IMR-90 (cell line): ENCODE measurements at regions of chr2 and their contacts with region 1.

Region 1: GRCh38 chr2:15471601-15472000 is 89.5 kb downstream of the NBAS start:
- DNase-seq: no peak
- ATAC-seq: no peak
- H3K4me3 ChIP-seq: no peak overlapping the region
- H3K27ac ChIP-seq: no peak overlapping the region
- H3K4me1 ChIP-seq: no peaks in the 10 kb centered on the region
- H3K27me3 ChIP-seq: no peaks in the 10 kb centered on the region
- CTCF ChIP-seq: no peak
- POLR2A ChIP-seq: no peak
- RAD21 ChIP-seq: no peak

Region 2: GRCh38 chr2:14420851-14421250 is 1050.8 kb before region 1 on chr2:
- CTCF ChIA-PET with region 1: no interaction called
- POLR2A ChIA-PET with region 1: no interaction called
- dilution Hi-C with region 1: no loop called
- in situ Hi-C with region 1: no loop called
- intact Hi-C with region 1: no loop called
- DNase-seq: peak; percentile 45
- ATAC-seq: no peak
- H3K4me3 ChIP-seq: no peak overlapping the region
- H3K27ac ChIP-seq: no peak overlapping the region
- H3K4me1 ChIP-seq: no peaks in the 10 kb centered on the region
- H3K27me3 ChIP-seq: no peaks in the 10 kb centered on the region
- CTCF ChIP-seq: no peak
- POLR2A ChIP-seq: no peak
- RAD21 ChIP-seq: no peak

Region 3: GRCh38 chr2:15421753-15422152 is 49.8 kb before region 1 on chr2:
- CTCF ChIA-PET with region 1: no interaction called
- POLR2A ChIA-PET with region 1: no interaction called
- dilution Hi-C with region 1: no loop called
- in situ Hi-C with region 1: no loop called
- intact Hi-C with region 1: loop called (anchors 1 kb)
- DNase-seq: no peak
- ATAC-seq: no peak
- H3K4me3 ChIP-seq: no peak overlapping the region
- H3K27ac ChIP-seq: no peak overlapping the region
- H3K4me1 ChIP-seq: peaks cover 3% of the 10 kb centered on the region; the same call in 1 of the 2 replicates
- H3K27me3 ChIP-seq: no peaks in the 10 kb centered on the region
- CTCF ChIP-seq: no peak
- POLR2A ChIP-seq: no peak
- RAD21 ChIP-seq: no peak

Region 4: DNA sequence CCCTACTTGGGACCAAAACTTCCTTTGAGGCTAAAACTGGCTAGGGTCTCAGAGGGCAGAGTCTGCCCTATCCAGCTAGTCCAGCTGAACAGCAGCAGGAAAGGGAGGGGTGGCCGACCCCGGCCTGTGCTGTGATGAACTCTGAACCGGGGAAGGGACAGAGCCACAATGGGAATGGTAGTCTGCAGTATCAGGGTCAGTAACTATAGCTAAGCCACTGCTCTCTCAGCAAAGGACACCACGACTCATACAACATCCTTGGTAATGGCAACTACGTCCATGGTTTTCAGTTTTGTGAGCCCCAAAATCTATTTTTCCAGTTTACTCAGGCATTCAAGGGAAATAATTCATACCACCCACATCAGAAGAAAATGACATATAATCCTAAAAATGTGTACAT is 14.3 kb after region 1 on chr2:
- CTCF ChIA-PET with region 1: no interaction called
- POLR2A ChIA-PET with region 1: no interaction called
- dilution Hi-C with region 1: no loop called
- in situ Hi-C with region 1: no loop called
- intact Hi-C with region 1: no loop called
- DNase-seq: no peak
- ATAC-seq: no peak
- H3K4me3 ChIP-seq: no peak overlapping the region
- H3K27ac ChIP-seq: no peak overlapping the region
- H3K4me1 ChIP-seq: no peaks in the 10 kb centered on the region
- H3K27me3 ChIP-seq: no peaks in the 10 kb centered on the region
- CTCF ChIP-seq: no peak
- POLR2A ChIP-seq: no peak
- RAD21 ChIP-seq: no peak